Colonic mucosa (tissue), 4 donors: ENCODE measurements at regions of chr19 and their contacts with region 1.

Region 1: GRCh38 chr19:28737021-28737895 is 475.7 kb downstream of the UQCRFS1 start:
- DNase-seq: no peak
- H3K4me3 ChIP-seq: no peak overlapping the region
- H3K27ac ChIP-seq: no peak overlapping the region
- H3K4me1 ChIP-seq: no peaks in the 10 kb centered on the region
- H3K27me3 ChIP-seq: no peaks in the 10 kb centered on the region
- CTCF ChIP-seq: peak; percentile 56

Region 2: GRCh38 chr19:28876609-28877123 is 139.4 kb after region 1 on chr19:
- intact Hi-C with region 1: loop called (anchors 2 kb)
- DNase-seq: no peak
- H3K4me3 ChIP-seq: no peak overlapping the region
- H3K27ac ChIP-seq: no peak overlapping the region
- H3K4me1 ChIP-seq: no peaks in the 10 kb centered on the region
- H3K27me3 ChIP-seq: no peaks in the 10 kb centered on the region
- CTCF ChIP-seq: no peak

Region 3: GRCh38 chr19:29263305-29264135 is 526.3 kb after region 1 on chr19:
- intact Hi-C with region 1: loop called (anchors 5 kb)
- DNase-seq: peak; percentile 49
- H3K4me3 ChIP-seq: no peak overlapping the region
- H3K27ac ChIP-seq: no peak overlapping the region
- H3K4me1 ChIP-seq: no peaks in the 10 kb centered on the region
- H3K27me3 ChIP-seq: no peaks in the 10 kb centered on the region
- CTCF ChIP-seq: peak; percentile 65